PC-9 (cell line): ENCODE measurements at regions of chr2 and their contacts with region 1.

Region 1: DNA sequence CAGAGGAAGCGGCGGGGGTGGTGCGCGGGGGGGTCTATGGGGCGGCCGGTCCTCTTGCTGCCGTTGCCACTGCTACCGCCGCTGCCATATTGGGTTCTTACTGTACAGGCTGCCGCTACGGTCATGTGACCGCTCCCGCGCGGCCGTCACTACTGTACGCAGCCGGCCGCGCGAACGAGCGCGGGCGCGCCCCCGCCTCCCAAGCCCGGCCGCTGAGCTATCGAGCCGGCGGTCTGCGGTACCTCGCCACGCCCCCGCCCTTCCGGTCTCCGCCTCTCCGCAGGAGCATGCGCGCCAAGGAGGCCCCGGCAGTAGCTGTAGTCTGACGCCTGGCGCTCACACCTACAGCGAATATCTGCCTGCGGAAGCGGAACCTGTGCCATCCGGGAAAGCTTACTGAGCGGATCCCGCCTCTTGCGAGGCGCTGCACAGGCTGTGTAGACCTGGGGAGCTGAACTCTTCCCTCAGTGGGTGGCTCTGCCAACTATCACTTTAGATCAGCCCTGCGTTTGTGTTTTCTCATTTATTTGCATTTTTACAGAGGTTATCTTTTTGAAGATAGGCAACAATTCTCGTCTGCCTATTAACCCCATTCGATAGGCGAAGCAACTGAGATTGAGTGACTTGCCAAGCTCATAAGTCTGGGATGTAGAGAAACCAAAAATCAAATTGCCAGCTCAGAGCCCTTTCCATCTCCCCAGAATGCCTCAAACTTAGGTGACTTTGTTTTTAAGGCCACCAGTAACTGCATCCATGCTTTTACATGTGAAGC is at the start of gene ASXL2:
- DNase-seq: peak; percentile 95 to 97
- H3K4me3 ChIP-seq: peak within 1 kb of the TSS; percentile 75
- H3K27ac ChIP-seq: peak within 1 kb of the TSS; percentile 88
- H3K4me1 ChIP-seq: peaks cover 29% of the 10 kb centered on the region
- H3K27me3 ChIP-seq: no peaks in the 10 kb centered on the region
- CTCF ChIP-seq: no peak
- total RNA-seq, gene ASXL2: 19.2 and 34.5 TPM in 2 replicates

Region 2: DNA sequence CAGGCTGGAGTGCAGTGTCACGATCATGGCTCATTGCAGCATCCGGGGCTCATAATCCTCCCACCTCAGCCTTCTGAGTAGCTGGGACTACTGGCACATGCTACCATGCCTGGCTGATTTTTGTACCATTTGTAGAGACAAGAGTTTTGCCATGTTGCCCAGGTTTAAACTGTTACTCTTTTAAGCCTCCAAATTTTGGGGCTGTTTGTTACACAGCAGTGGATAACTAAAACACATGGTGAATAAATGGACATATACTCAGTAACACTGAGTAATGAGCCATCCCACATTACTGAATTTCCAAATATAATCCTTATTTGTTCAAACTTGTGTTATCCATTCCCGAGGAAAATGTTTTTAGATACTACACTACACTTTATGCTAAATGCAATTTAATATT is 968.3 kb before region 1 on chr2:
- CTCF ChIA-PET with region 1: no interaction called
- POLR2A ChIA-PET with region 1: interaction called, 18 read pairs
- intact Hi-C with region 1: no loop called
- DNase-seq: no peak
- H3K4me3 ChIP-seq: no peak overlapping the region
- H3K27ac ChIP-seq: no peak overlapping the region
- H3K4me1 ChIP-seq: no peaks in the 10 kb centered on the region
- H3K27me3 ChIP-seq: no peaks in the 10 kb centered on the region
- CTCF ChIP-seq: no peak

Region 3: GRCh38 chr2:25618642-25619037 is 259.9 kb before region 1 on chr2:
- CTCF ChIA-PET with region 1: no interaction called
- POLR2A ChIA-PET with region 1: interaction called, 13 read pairs
- intact Hi-C with region 1: no loop called
- DNase-seq: peak in 1 of 2 experiments; percentile 94
- H3K4me3 ChIP-seq: no peak overlapping the region
- H3K27ac ChIP-seq: peak overlapping the region; percentile 62
- H3K4me1 ChIP-seq: peaks cover 25% of the 10 kb centered on the region
- H3K27me3 ChIP-seq: no peaks in the 10 kb centered on the region
- CTCF ChIP-seq: no peak

Region 4: GRCh38 chr2:25714740-25715139 is 163.8 kb before region 1 on chr2:
- CTCF ChIA-PET with region 1: no interaction called
- POLR2A ChIA-PET with region 1: no interaction called
- intact Hi-C with region 1: no loop called
- DNase-seq: peak in 1 of 2 experiments; percentile 54
- H3K4me3 ChIP-seq: no peak overlapping the region
- H3K27ac ChIP-seq: no peak overlapping the region
- H3K4me1 ChIP-seq: no peaks in the 10 kb centered on the region
- H3K27me3 ChIP-seq: no peaks in the 10 kb centered on the region
- CTCF ChIP-seq: no peak; the same call in 1 of the 2 replicates

Region 5: GRCh38 chr2:26001743-26002351 is 123.3 kb after region 1 on chr2:
- CTCF ChIA-PET with region 1: no interaction called
- POLR2A ChIA-PET with region 1: interaction called, 15 read pairs
- intact Hi-C with region 1: no loop called
- DNase-seq: no peak
- H3K4me3 ChIP-seq: no peak overlapping the region
- H3K27ac ChIP-seq: no peak overlapping the region
- H3K4me1 ChIP-seq: peaks cover 53% of the 10 kb centered on the region
- H3K27me3 ChIP-seq: no peaks in the 10 kb centered on the region
- CTCF ChIP-seq: no peak

Region 6: GRCh38 chr2:26355038-26355995 is 476.8 kb after region 1 on chr2:
- CTCF ChIA-PET with region 1: no interaction called
- POLR2A ChIA-PET with region 1: interaction called, 28 read pairs
- intact Hi-C with region 1: no loop called
- DNase-seq: peak; percentile 48 to 100
- H3K4me3 ChIP-seq: peak overlapping the region; percentile 46
- H3K27ac ChIP-seq: peak overlapping the region; percentile 99
- H3K4me1 ChIP-seq: peaks cover 63% of the 10 kb centered on the region
- H3K27me3 ChIP-seq: no peaks in the 10 kb centered on the region
- CTCF ChIP-seq: peak; percentile 17; the same call in 1 of the 2 replicates